Calu3 (cell line): ENCODE measurements at regions of chr19 and their contacts with region 1.

Region 1: DNA sequence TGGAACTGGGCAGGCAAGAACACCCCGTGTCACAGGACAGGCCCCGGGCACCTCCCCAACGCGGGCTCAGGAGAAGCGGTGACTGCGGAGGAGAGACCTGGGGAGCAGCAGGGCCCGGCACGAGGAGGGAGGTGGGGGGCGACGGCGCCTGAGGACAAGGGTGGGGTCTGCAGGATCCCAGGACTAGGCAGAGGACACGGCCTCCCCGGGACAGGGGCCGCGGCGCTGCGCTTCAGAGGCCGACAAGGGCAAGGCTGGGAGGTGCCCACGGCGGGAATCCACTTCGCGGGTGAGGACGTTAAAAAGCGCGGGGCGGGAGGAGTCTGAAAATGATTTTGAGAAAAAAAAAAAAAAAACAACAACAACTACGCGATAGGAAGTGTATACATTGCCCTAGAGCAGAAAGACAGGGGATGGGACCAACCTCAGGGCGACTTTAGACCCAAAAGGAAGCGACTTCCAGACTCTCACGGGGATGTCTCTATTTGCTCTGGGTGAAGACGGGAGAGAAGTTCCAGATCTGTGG is 44.9 kb downstream of the ZNF611 start:
- DNase-seq: peak; percentile 3
- H3K4me3 Mint-ChIP-seq: peak overlapping the region; percentile 73
- H3K27ac Mint-ChIP-seq: no peak overlapping the region
- H3K4me1 Mint-ChIP-seq: no peaks in the 10 kb centered on the region
- H3K27me3 Mint-ChIP-seq: no peaks in the 10 kb centered on the region
- CTCF ChIP-seq: no peak

Region 2: DNA sequence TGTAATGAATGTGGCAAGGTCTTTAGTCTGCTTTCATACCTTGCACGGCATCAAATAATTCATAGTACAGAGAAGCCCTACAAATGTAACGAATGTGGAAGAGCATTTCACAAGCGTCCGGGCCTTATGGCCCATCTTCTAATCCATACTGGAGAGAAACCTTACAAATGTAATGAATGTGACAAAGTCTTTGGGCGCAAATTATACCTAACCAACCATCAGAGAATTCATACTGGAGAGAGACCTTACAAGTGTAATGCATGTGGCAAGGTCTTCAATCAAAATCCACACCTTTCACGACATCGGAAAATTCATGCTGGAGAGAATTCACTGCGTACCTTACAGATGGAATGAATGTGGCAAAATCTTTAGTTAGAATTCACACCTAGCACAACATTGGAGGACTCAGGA is 323.5 kb before region 1 on chr19:
- CTCF ChIA-PET with region 1: no interaction called
- intact Hi-C with region 1: no loop called
- DNase-seq: no peak
- H3K4me3 Mint-ChIP-seq: no peak overlapping the region
- H3K27ac Mint-ChIP-seq: no peak overlapping the region
- H3K4me1 Mint-ChIP-seq: no peaks in the 10 kb centered on the region
- H3K27me3 Mint-ChIP-seq: no peaks in the 10 kb centered on the region
- CTCF ChIP-seq: no peak

Region 3: GRCh38 chr19:52428937-52429336 is 261.0 kb before region 1 on chr19 and contains the start of gene ZNF534:
- CTCF ChIA-PET with region 1: no interaction called
- intact Hi-C with region 1: no loop called
- DNase-seq: no peak
- H3K4me3 Mint-ChIP-seq: no peak within 1 kb of the TSS
- H3K27ac Mint-ChIP-seq: no peak within 1 kb of the TSS
- H3K4me1 Mint-ChIP-seq: no peaks in the 10 kb centered on the region
- H3K27me3 Mint-ChIP-seq: no peaks in the 10 kb centered on the region
- CTCF ChIP-seq: no peak
- total RNA-seq, gene ZNF534: not detected in 2 replicates

Region 4: DNA sequence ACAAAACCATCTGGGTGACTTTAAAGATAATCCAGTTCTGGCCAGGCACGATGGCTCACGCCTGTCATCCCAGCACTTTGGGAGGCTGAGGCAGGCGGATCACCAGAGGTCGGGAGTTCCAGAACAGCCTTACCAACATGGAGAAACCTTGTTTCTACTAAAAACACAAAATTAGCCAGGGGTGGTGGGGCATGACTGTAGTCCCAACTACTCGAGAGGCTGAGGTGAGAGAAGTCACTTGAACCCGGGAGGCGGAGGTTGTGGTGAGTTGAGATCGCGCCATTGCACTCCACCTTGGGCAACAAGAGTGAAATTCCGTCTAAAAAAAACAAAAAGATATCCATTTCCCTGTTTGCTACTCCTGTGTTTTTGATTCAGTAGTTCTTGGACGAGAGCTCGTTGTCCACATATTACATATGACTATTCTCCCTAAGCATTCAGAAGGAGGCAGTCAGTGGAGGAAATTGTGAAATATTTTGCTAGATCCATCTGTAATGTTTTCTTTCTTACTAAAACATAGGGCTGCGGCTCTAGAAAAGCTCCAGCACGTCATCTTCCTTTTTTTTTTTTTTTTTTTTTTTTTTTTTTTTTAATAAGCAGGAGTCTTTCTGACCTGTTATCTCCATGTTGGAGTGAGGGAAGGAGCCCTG is 86.2 kb before region 1 on chr19:
- CTCF ChIA-PET with region 1: no interaction called
- intact Hi-C with region 1: no loop called
- DNase-seq: no peak
- H3K4me3 Mint-ChIP-seq: no peak overlapping the region
- H3K27ac Mint-ChIP-seq: no peak overlapping the region
- H3K4me1 Mint-ChIP-seq: no peaks in the 10 kb centered on the region
- H3K27me3 Mint-ChIP-seq: no peaks in the 10 kb centered on the region
- CTCF ChIP-seq: no peak

Region 5: GRCh38 chr19:52761696-52762095 is 71.8 kb after region 1 on chr19:
- CTCF ChIA-PET with region 1: no interaction called
- intact Hi-C with region 1: no loop called
- DNase-seq: no peak
- H3K4me3 Mint-ChIP-seq: no peak overlapping the region
- H3K27ac Mint-ChIP-seq: no peak overlapping the region
- H3K4me1 Mint-ChIP-seq: no peaks in the 10 kb centered on the region
- H3K27me3 Mint-ChIP-seq: no peaks in the 10 kb centered on the region
- CTCF ChIP-seq: no peak

Region 6: GRCh38 chr19:53365134-53365898 is 675.4 kb after region 1 on chr19 and contains the start of gene ZNF525:
- CTCF ChIA-PET with region 1: no interaction called
- intact Hi-C with region 1: loop called (anchors 5 kb)
- DNase-seq: peak; percentile 96
- H3K4me3 Mint-ChIP-seq: peak within 1 kb of the TSS; percentile 90
- H3K27ac Mint-ChIP-seq: peak within 1 kb of the TSS; percentile 88
- H3K4me1 Mint-ChIP-seq: peaks cover 12% of the 10 kb centered on the region
- H3K27me3 Mint-ChIP-seq: no peaks in the 10 kb centered on the region
- CTCF ChIP-seq: peak; percentile 30
- total RNA-seq, gene ZNF525: 20.7 and 21.2 TPM in 2 replicates